Caco-2 (cell line): ENCODE measurements at regions of chr3 and their contacts with region 1.

Region 1: DNA sequence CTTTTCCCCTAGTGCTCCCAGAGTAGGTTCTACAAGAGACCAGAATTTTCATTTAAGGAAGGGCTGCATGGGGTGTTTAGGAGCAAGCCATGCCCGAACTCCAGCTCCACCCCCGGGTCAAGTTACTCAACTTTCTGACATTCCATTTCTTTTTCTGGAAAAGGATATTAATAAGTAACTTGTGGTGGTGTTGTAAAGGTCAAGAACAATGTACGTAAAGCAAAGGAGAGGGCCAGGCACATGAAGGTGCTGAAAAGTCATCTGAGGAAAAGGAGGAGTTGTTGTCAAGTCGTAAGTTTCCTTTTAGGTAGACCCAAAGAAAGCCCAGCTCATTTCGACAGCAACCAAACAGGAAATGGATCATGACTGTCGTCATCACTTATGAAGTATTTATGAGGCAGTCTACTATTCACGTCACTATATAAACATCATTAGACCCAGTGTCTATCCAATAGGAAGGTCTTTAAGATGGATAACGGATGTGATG is 319.6 kb upstream of the IL12A start:
- DNase-seq: peak; percentile 72 to 73
- H3K4me3 ChIP-seq: no peak overlapping the region
- H3K4me3 Mint-ChIP-seq: peak overlapping the region; percentile 61
- H3K27ac Mint-ChIP-seq: peak overlapping the region; percentile 90
- H3K4me1 ChIP-seq: peaks cover 60% of the 10 kb centered on the region
- H3K4me1 Mint-ChIP-seq: peaks cover 32% of the 10 kb centered on the region
- H3K27me3 ChIP-seq: no peaks in the 10 kb centered on the region
- H3K27me3 Mint-ChIP-seq: no peaks in the 10 kb centered on the region
- CTCF ChIP-seq: no peak

Region 2: DNA sequence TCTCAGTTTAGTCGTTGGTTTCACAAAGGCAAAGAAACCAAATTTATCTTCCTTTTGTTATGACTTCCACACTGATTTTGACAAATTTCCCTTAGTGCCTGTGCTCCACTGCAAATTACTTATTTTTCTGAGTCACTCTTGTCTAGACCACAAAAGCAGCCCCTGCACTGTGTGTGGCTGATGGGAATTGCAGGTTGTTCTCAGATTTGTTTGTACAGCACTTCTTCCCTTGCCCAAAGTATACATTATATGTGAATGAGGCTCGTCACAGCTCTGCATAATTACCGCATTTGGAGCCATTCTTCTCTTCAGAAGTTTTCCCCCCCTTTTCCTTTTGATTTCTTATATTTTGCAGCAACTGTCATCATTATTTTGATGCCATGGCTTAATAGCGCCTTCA is 34.5 kb before region 1 on chr3:
- CTCF ChIA-PET with region 1: interaction called, 4 read pairs
- POLR2A ChIA-PET with region 1: interaction called, 4 read pairs
- intact Hi-C with region 1: loop called (anchors 1 kb)
- DNase-seq: no peak
- H3K4me3 ChIP-seq: no peak overlapping the region
- H3K4me3 Mint-ChIP-seq: peak overlapping the region; percentile 37
- H3K27ac Mint-ChIP-seq: peak overlapping the region; percentile 65
- H3K4me1 ChIP-seq: peaks cover 54% of the 10 kb centered on the region
- H3K4me1 Mint-ChIP-seq: peaks cover 44% of the 10 kb centered on the region
- H3K27me3 ChIP-seq: no peaks in the 10 kb centered on the region
- H3K27me3 Mint-ChIP-seq: no peaks in the 10 kb centered on the region
- CTCF ChIP-seq: no peak

Region 3: DNA sequence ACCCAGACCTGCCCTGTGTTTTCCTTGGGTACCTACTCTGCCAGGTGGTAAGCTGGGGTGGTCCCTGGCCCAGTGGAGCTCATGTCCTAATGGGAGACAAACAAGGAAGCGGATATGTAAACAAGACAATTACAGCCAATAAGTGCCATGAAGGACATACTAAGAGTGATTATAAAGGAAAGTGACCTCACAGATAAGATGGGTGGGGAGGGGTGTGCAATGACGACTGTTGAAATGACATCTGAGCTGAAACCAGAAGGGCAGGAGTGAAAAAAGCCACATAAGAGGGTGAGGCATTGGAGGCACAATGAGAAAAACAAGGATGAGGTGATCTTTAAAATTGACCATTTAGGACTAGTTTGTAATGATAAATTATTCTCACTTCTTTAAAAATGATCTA is 16.6 kb before region 1 on chr3:
- CTCF ChIA-PET with region 1: no interaction called
- POLR2A ChIA-PET with region 1: no interaction called
- intact Hi-C with region 1: loop called (anchors 2 kb)
- DNase-seq: no peak
- H3K4me3 ChIP-seq: no peak overlapping the region
- H3K4me3 Mint-ChIP-seq: no peak overlapping the region
- H3K27ac Mint-ChIP-seq: no peak overlapping the region
- H3K4me1 ChIP-seq: 0 out of 2 replicates have a peak, but pooled peaks cover 7% of the 10 kb centered on the region
- H3K4me1 Mint-ChIP-seq: peaks cover 7% of the 10 kb centered on the region
- H3K27me3 ChIP-seq: no peaks in the 10 kb centered on the region
- H3K27me3 Mint-ChIP-seq: no peaks in the 10 kb centered on the region
- CTCF ChIP-seq: no peak

Region 4: GRCh38 chr3:159726231-159726964 is 57.4 kb after region 1 on chr3:
- CTCF ChIA-PET with region 1: no interaction called
- POLR2A ChIA-PET with region 1: no interaction called
- intact Hi-C with region 1: no loop called
- DNase-seq: no peak
- H3K4me3 ChIP-seq: no peak overlapping the region
- H3K4me3 Mint-ChIP-seq: no peak overlapping the region
- H3K27ac Mint-ChIP-seq: no peak overlapping the region
- H3K4me1 ChIP-seq: peaks cover 10% of the 10 kb centered on the region
- H3K4me1 Mint-ChIP-seq: peaks cover 10% of the 10 kb centered on the region
- H3K27me3 ChIP-seq: no peaks in the 10 kb centered on the region
- H3K27me3 Mint-ChIP-seq: no peaks in the 10 kb centered on the region
- CTCF ChIP-seq: no peak

Region 5: GRCh38 chr3:159787191-159787590 is 118.2 kb after region 1 on chr3:
- CTCF ChIA-PET with region 1: no interaction called
- POLR2A ChIA-PET with region 1: interaction called, 3 read pairs
- intact Hi-C with region 1: loop called (anchors 1 kb)
- DNase-seq: peak; percentile 67 to 78
- H3K4me3 ChIP-seq: no peak overlapping the region
- H3K4me3 Mint-ChIP-seq: peak overlapping the region; percentile 65
- H3K27ac Mint-ChIP-seq: peak overlapping the region; percentile 96
- H3K4me1 ChIP-seq: peaks cover 99% of the 10 kb centered on the region
- H3K4me1 Mint-ChIP-seq: peaks cover 65% of the 10 kb centered on the region
- H3K27me3 ChIP-seq: no peaks in the 10 kb centered on the region
- H3K27me3 Mint-ChIP-seq: no peaks in the 10 kb centered on the region
- CTCF ChIP-seq: no peak